ENCODE measurements at regions of chr5 and their contacts with region 1.

Region 1: DNA sequence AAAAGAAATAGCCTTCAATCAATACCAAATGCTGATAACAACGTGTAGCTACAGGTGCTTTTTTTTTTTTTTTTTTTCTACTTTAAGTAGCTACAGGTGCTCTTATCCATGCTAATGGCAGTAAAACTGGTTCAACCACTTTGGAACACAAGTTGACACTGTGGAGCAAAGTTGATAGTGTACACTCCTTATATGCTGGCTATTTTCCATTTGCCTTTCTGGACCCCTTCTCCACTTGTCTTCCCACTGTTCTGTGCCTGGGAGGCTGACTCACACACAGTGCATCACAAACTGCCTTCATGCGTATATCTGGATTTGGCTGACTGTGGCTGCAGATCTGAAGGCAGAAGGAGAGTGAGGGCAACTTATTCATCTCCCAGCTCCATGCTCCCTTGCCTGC is 247.9 kb downstream of the MSX2 start:
- DNase-seq: no peak

Region 2: DNA sequence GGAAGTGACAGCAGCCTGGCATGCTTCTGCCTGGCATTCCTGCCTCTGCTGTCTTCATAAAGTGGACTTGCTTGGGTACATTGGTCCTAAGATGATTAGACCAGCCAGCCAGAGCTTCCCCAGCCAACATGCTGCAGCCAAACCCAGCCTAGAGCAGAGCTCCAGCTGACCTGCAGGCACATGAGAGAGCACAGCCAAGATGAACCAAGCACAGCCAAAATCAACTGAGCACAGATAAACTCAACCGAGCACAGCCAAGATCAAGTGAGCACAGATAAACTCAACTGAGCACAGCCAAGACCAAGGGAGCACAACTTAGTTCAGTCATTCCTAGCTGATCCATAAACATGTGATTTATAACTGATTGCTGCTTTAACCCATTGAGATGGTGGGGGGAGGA is 18.6 kb after region 1 on chr5:
- intact Hi-C with region 1: loop called in 1 of 2 experiments (anchors 1 kb)
- DNase-seq: no peak

Region 3: DNA sequence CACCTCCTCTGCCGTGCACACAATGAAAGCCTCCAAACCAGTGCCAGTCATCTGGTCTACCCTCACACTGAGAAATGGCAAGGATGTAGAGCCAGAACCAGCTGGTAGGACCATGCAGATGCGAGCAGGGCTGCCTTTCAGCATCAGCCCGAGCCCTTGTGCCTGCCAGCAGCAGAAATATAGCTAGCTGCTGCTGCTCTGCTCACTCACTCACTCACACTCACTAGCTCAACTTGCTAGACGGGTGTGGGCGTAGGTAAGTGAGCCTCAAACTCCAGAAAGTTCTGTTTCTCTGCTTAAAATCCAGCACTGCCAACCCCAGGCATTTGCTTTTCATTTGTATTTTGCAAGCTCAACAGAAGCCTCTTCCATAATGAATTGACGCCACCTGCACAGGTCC is 357.7 kb after region 1 on chr5:
- intact Hi-C with region 1: loop called in 1 of 2 experiments (anchors 5 kb)
- DNase-seq: no peak